ENCODE measurements at regions of chr3 and their contacts with region 1.

Region 1: DNA sequence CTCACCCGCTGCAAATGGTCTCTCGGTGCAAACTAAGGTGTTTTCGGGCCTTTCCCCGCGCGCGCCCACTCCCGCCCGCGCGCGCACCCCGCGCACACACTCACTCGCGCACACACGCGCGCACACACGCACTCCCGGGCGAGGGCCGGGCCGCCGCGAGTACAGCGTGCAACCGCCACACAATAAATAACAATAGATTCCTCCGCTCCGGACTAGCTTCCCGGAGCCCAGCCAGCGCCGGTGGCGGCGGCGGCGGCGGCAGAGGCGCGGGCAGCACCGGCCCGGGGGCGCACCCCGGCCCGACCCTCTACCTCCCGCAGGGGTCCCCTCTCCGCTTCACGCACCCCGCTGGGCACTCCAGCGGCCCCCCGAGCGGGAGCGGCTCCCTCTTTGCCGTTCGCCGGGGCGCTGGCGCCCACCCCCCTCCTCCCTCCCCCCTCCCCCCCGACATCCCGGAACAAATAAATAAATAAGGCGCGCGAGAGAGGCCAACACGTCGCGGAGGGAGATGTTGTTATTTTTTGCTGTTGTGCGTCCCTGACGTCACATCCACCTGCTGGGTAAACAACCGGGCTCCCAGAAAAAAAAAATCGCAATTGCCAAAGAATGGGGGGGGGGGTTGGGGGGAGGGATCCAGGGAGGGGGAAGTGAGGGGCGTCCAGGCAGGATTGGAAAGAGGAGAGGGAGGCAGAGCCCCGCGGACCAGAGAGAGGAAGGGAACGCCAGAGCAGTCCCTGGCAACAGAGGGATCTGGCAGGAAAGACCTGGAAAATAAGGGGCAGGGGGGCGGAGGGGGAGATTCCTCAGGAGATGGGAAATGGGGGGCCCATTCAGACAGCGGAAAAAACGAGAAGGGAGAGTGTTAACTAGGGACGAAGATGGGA is at the start of gene FOXP1:
- DNase-seq: peak; percentile 92
- H3K4me3 ChIP-seq: peak within 1 kb of the TSS; percentile 86 to 98 (median 90)
- H3K27ac ChIP-seq: peak within 1 kb of the TSS; percentile 96 to 100 (median 98)
- H3K4me1 ChIP-seq: peaks cover 5 to 48% (median 37%) of the 10 kb centered on the region in 4 donors
- H3K27me3 ChIP-seq: no peaks in the 10 kb centered on the region
- CTCF ChIP-seq: no peak
- EP300 ChIP-seq: no peak
- POLR2A ChIP-seq: peak; percentile 15
- total RNA-seq, gene FOXP1: 181 to 225 (median 205) TPM

Region 2: GRCh38 chr3:70716832-70717231 is 867.0 kb before region 1 on chr3:
- intact Hi-C with region 1: loop called (anchors 10 kb)
- DNase-seq: no peak
- H3K4me3 ChIP-seq: no peak overlapping the region
- H3K27ac ChIP-seq: no peak overlapping the region
- H3K4me1 ChIP-seq: peaks cover 0 to 15% (median 10%) of the 10 kb centered on the region in 4 donors
- H3K27me3 ChIP-seq: no peaks in the 10 kb centered on the region
- CTCF ChIP-seq: peak; percentile 59 to 64 (median 61)
- EP300 ChIP-seq: peak; percentile 55
- POLR2A ChIP-seq: no peak

Region 3: DNA sequence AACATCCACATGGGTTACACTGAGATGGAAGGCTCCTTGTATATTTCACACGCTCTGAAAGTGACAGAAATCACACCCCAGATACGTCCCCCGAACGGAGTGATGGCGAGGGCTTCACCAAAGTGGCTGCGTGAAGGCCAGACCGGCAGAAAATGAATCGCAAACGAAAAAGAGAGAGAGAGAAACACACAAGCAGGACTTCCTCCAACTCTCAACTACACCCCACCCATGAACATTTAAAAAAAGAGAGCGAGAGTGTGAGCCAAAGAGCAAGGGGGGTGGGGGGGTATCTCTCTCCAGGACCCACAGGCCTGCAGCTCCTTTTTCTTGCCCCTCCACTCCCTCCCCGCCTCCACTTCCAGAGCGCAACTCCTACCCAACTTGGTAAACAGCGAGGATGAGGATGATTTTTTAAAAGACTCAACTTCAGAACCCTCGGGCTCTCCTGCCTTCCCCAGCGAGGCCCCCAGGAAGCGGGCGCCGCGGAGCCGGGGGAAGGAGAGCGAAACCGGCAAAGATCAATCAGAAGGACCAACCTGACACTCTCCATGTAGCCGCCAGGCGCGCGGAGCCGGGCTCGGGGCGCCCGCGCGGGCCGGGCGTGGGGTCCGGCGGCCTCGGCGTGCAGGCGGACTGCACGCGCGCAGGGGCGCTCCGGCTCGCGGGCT is 519.4 kb before region 1 on chr3:
- intact Hi-C with region 1: loop called (anchors 5 kb)
- DNase-seq: no peak
- H3K4me3 ChIP-seq: peak overlapping the region; percentile 68 to 75 (median 72)
- H3K27ac ChIP-seq: peak overlapping the region; percentile 92 to 98 (median 98)
- H3K4me1 ChIP-seq: peaks cover 40 to 63% (median 56%) of the 10 kb centered on the region in 4 donors
- H3K27me3 ChIP-seq: no peaks in the 10 kb centered on the region
- CTCF ChIP-seq: peak in 2 of 3 experiments; percentile 14 to 25
- EP300 ChIP-seq: no peak
- POLR2A ChIP-seq: no peak

Region 4: DNA sequence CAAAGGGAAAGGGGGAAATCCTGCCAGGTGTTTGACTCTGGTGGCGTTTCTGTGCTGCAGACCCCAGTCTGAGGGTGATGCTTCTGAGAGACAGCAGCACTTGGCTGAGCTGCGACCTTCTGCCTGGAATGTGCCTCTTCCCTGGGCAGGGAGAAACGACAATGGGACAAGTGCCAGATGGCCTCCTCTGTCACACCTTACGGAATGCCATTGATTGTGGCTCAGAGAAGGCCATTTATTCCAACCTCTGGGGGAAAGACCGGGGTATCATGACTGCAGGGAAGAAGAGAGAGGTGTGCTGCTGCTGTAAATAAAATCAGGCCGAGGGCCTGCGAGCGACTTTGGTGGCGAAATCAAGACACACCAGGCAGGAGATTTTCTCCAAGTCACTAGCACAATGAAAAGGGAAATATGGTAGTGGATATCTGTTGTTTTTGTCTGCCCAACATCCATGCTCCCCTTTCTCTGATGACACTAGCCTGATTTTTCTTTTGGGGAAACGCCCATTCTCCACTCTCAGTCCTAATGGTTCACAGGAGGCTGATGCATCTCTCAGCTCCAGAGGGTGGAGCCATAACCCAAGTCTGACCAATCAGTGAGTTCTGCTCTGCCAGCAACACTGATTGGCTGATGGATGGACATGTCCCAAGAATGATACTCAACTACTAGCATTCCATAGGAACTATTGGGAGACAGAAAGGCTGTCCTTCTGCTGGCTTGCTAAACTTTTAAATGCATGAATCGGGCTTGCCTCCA is 336.4 kb before region 1 on chr3:
- intact Hi-C with region 1: loop called (anchors 5 kb)
- DNase-seq: no peak
- H3K4me3 ChIP-seq: no peak overlapping the region
- H3K27ac ChIP-seq: peak overlapping the region; percentile 61 to 86 (median 81)
- H3K4me1 ChIP-seq: peaks cover 37 to 74% (median 71%) of the 10 kb centered on the region in 4 donors
- H3K27me3 ChIP-seq: no peaks in the 10 kb centered on the region
- CTCF ChIP-seq: peak in 2 of 3 experiments; percentile 7 to 16
- EP300 ChIP-seq: no peak
- POLR2A ChIP-seq: no peak

Region 5: GRCh38 chr3:71430941-71431552 is 152.8 kb before region 1 on chr3:
- intact Hi-C with region 1: loop called (anchors 10 kb)
- DNase-seq: no peak
- H3K4me3 ChIP-seq: no peak overlapping the region
- H3K27ac ChIP-seq: peak overlapping the region in 2 of 4 donors; percentile 35 to 45
- H3K4me1 ChIP-seq: peaks cover 31 to 77% (median 68%) of the 10 kb centered on the region in 4 donors
- H3K27me3 ChIP-seq: no peaks in the 10 kb centered on the region
- CTCF ChIP-seq: no peak
- EP300 ChIP-seq: no peak
- POLR2A ChIP-seq: no peak

Region 6: DNA sequence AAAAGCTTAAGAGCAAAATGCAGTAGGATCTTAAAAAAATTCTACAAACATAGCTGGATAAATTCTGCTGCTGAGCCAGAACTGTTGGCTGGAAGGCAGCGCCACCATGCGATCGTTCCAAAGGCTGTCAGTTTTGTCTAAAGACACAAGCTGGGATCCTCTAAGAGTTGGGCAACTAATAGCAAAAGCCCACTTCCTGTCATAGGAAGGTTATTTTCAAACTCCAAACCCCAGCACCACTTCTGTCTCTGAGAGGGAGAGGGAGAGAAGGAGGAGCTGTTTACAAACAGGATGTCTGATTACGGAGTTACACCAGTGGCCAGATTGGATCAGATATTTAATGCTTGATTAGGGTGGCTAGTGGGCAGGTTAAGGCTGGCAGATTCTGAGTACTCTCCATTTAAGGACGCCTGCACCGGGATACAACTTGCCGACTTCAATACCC is 97.4 kb after region 1 on chr3:
- intact Hi-C with region 1: loop called (anchors 5 kb)
- DNase-seq: no peak
- H3K4me3 ChIP-seq: peak overlapping the region in 1 of 4 donors; percentile 19
- H3K27ac ChIP-seq: peak overlapping the region; percentile 56 to 70 (median 66)
- H3K4me1 ChIP-seq: peaks cover 12 to 56% (median 50%) of the 10 kb centered on the region in 4 donors
- H3K27me3 ChIP-seq: no peaks in the 10 kb centered on the region
- CTCF ChIP-seq: peak; percentile 70 to 81 (median 75)
- EP300 ChIP-seq: no peak
- POLR2A ChIP-seq: no peak

Measured in esophagus muscularis mucosa (tissue), 4 donors.